IMR-90 (cell line): ENCODE measurements at regions of chr3 and their contacts with region 1.

Region 1: GRCh38 chr3:48199956-48200355 is 11.7 kb upstream of the CDC25A start:
- DNase-seq: no peak
- ATAC-seq: no peak
- H3K4me3 ChIP-seq: no peak overlapping the region
- H3K27ac ChIP-seq: no peak overlapping the region
- H3K4me1 ChIP-seq: no peaks in the 10 kb centered on the region
- H3K27me3 ChIP-seq: peaks cover 9% of the 10 kb centered on the region
- CTCF ChIP-seq: no peak
- POLR2A ChIP-seq: no peak
- RAD21 ChIP-seq: no peak

Region 2: GRCh38 chr3:48188266-48189201 is 11.4 kb before region 1 on chr3 and contains the start of gene CDC25A:
- CTCF ChIA-PET with region 1: interaction called, 5 read pairs
- POLR2A ChIA-PET with region 1: interaction called, 16 read pairs
- dilution Hi-C with region 1: no loop called
- in situ Hi-C with region 1: no loop called
- intact Hi-C with region 1: no loop called
- DNase-seq: peak; percentile 98
- ATAC-seq: peak; percentile 98
- H3K4me3 ChIP-seq: peak within 1 kb of the TSS; percentile 67
- H3K27ac ChIP-seq: peak within 1 kb of the TSS; percentile 74
- H3K4me1 ChIP-seq: peaks cover 2% of the 10 kb centered on the region; the same call in 1 of the 2 replicates
- H3K27me3 ChIP-seq: no peaks in the 10 kb centered on the region
- CTCF ChIP-seq: no peak
- POLR2A ChIP-seq: peak; percentile 71; the same call in 1 of the 2 replicates
- RAD21 ChIP-seq: no peak
- total RNA-seq, gene CDC25A: 9.7 and 10.6 TPM in 2 replicates

Region 3: GRCh38 chr3:48294611-48295263 is 94.8 kb after region 1 on chr3:
- CTCF ChIA-PET with region 1: no interaction called
- POLR2A ChIA-PET with region 1: no interaction called
- dilution Hi-C with region 1: no loop called
- in situ Hi-C with region 1: no loop called
- intact Hi-C with region 1: no loop called
- DNase-seq: no peak
- ATAC-seq: no peak
- H3K4me3 ChIP-seq: no peak overlapping the region
- H3K27ac ChIP-seq: no peak overlapping the region
- H3K4me1 ChIP-seq: no peaks in the 10 kb centered on the region
- H3K27me3 ChIP-seq: no peaks in the 10 kb centered on the region
- CTCF ChIP-seq: no peak
- POLR2A ChIP-seq: no peak
- RAD21 ChIP-seq: no peak